Psoas muscle (tissue), 8 donors: ENCODE measurements at regions of chr1 and their contacts with region 1.

Region 1: DNA sequence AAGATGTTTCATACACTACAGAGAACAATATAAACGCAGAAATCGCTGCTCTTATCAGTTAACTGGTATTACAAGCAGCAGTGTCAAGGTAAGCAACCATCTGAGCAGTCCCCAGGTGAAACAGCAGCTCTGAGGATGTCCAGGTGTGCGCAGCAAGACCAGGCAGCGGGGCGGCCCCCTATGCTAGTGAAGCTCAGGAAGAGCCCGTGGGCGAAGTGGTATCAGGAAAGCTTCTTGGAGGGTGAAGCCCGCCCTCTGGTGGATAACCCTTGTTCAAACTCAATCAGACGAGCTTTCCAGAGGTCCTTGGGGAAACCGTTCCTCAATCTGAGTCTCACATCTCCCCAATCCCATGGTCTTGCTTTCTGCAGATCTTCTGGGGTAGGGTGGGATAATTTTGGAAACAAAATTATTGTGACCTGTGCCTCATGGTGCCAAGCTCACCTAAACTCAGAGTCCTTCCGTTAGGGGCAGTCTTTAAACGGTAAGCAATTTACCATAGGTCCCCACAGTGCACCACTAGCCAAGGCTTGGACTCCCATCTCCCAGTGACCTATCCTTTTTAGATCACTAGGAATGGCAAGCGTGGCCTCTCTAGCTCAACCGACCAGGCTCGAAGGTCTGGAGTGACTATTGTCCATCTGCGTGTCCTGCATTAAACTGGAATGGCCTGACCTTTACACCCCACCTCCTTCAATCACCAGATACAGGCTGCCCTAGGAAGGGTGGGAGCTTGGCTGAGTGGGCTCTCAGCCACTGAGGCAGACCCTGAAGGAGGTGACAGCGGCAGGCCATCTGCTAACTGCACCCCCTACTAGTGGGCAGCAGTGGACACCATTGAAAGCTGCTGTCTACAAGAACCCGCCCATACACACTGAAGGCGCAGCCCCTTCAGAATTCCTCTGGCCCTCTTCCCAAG is 13.6 kb upstream of the FAM110D start:
- DNase-seq: peak; percentile 76 to 86
- ATAC-seq: peak; percentile 93 to 98 (median 96)
- H3K4me3 ChIP-seq: no peak overlapping the region
- H3K27ac ChIP-seq: no peak overlapping the region
- H3K4me1 ChIP-seq: no peaks in the 10 kb centered on the region
- H3K27me3 ChIP-seq: no peaks in the 10 kb centered on the region
- CTCF ChIP-seq: peak; percentile 85

Region 2: DNA sequence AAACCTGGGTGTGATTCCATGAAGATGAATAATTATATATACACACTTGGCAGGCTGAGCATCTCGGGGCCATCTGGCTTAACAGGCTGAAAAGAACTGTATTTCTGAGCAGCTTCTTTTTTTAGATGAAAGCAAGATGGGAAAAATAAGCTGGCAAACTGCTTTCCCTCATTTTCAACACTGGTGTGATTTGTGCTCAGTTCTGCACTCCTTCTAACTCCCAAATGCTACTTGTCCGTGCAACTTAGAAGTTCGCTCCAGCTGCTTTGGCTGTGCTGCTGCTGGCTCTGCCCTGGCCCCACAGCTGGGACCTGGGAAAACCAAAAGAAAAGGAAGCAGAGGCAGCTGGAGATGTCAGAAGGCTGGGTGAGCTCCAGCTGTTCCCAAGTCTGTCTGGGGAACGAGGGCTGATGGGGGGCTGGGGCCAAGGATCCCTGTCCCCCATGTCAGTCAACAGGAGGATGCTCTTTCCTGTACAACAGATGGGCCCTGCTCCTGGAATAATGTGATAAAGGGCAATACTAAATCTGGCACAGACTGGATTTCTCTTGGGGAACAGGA is 192.4 kb before region 1 on chr1:
- intact Hi-C with region 1: no loop called
- DNase-seq: peak in 1 of 2 donors; percentile 70
- ATAC-seq: peak in 1 of 4 donors; percentile 33
- H3K4me3 ChIP-seq: no peak overlapping the region
- H3K27ac ChIP-seq: no peak overlapping the region
- H3K4me1 ChIP-seq: no peaks in the 10 kb centered on the region
- H3K27me3 ChIP-seq: no peaks in the 10 kb centered on the region
- CTCF ChIP-seq: no peak

Region 3: GRCh38 chr1:26102526-26102925 is 42.8 kb before region 1 on chr1:
- intact Hi-C with region 1: loop called (anchors 1 kb)
- DNase-seq: no peak
- ATAC-seq: no peak
- H3K4me3 ChIP-seq: no peak overlapping the region
- H3K27ac ChIP-seq: no peak overlapping the region
- H3K4me1 ChIP-seq: peaks cover 10% of the 10 kb centered on the region
- H3K27me3 ChIP-seq: no peaks in the 10 kb centered on the region
- CTCF ChIP-seq: no peak

Region 4: GRCh38 chr1:26114165-26114927 is 31.0 kb before region 1 on chr1:
- intact Hi-C with region 1: no loop called
- DNase-seq: no peak
- ATAC-seq: peak; percentile 45 to 66 (median 59)
- H3K4me3 ChIP-seq: peak overlapping the region; percentile 98
- H3K27ac ChIP-seq: peak overlapping the region; percentile 96
- H3K4me1 ChIP-seq: peaks cover 29% of the 10 kb centered on the region
- H3K27me3 ChIP-seq: no peaks in the 10 kb centered on the region
- CTCF ChIP-seq: no peak